ENCODE measurements at regions of chr18 and their contacts with region 1.

Region 1: GRCh38 chr18:2223849-2224248 is 347.5 kb downstream of the METTL4 start:
- DNase-seq: peak; percentile 15
- ATAC-seq: peak; percentile 67
- H3K4me3 ChIP-seq: no peak overlapping the region
- H3K27ac ChIP-seq: no peak overlapping the region
- H3K4me1 ChIP-seq: no peaks in the 10 kb centered on the region
- H3K27me3 ChIP-seq: no peaks in the 10 kb centered on the region
- CTCF ChIP-seq: peak; percentile 40 to 61 (median 49); a peak in 5 of 6 replicates
- POLR2A ChIP-seq: no peak
- RAD21 ChIP-seq: peak; percentile 75

Region 2: GRCh38 chr18:1585879-1586488 is 637.9 kb before region 1 on chr18:
- CTCF ChIA-PET with region 1: interaction called, 4 read pairs
- POLR2A ChIA-PET with region 1: no interaction called
- RAD21 ChIA-PET with region 1: no interaction called
- intact Hi-C with region 1: loop called (anchors 5 kb)
- DNase-seq: peak; percentile 32
- ATAC-seq: peak; percentile 78
- H3K4me3 ChIP-seq: no peak overlapping the region
- H3K27ac ChIP-seq: no peak overlapping the region
- H3K4me1 ChIP-seq: no peaks in the 10 kb centered on the region
- H3K27me3 ChIP-seq: 0 out of 2 replicates have a peak, but pooled peaks cover 6% of the 10 kb centered on the region
- CTCF ChIP-seq: peak; percentile 24 to 62 (median 34); a peak in 4 of 6 replicates
- POLR2A ChIP-seq: no peak
- RAD21 ChIP-seq: peak; percentile 48

Region 3: DNA sequence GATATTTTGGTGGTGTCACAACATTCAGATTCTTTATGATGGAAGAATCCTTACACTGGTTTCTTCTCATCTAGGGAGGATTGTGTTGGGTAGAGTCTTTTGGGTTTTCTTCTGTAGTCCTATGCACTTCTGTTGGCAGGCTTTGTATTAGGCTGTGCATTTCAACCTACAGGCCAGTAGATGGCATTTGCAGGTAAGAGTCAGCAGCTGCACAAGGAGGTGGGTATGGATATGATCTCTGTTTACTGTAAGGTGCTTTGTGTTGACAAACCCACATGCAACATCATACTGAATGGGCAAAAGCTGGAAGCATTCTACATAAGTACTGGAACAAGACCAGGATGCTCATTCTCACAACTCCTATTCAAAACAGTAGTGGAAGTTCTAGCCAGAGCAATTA is 309.4 kb before region 1 on chr18:
- CTCF ChIA-PET with region 1: interaction called, 3 read pairs
- POLR2A ChIA-PET with region 1: no interaction called
- RAD21 ChIA-PET with region 1: no interaction called
- intact Hi-C with region 1: loop called (anchors 2 kb)
- DNase-seq: peak; percentile 22
- ATAC-seq: peak; percentile 90
- H3K4me3 ChIP-seq: no peak overlapping the region
- H3K27ac ChIP-seq: no peak overlapping the region
- H3K4me1 ChIP-seq: no peaks in the 10 kb centered on the region
- H3K27me3 ChIP-seq: no peaks in the 10 kb centered on the region
- CTCF ChIP-seq: peak; percentile 29 to 70 (median 60); a peak in 5 of 6 replicates
- POLR2A ChIP-seq: no peak
- RAD21 ChIP-seq: peak; percentile 58

Region 4: GRCh38 chr18:2104620-2105462 is 119.0 kb before region 1 on chr18:
- CTCF ChIA-PET with region 1: interaction called, 11 read pairs
- POLR2A ChIA-PET with region 1: no interaction called
- RAD21 ChIA-PET with region 1: no interaction called
- intact Hi-C with region 1: loop called (anchors 5 kb)
- DNase-seq: peak; percentile 31
- ATAC-seq: peak; percentile 99
- H3K4me3 ChIP-seq: no peak overlapping the region
- H3K27ac ChIP-seq: no peak overlapping the region
- H3K4me1 ChIP-seq: no peaks in the 10 kb centered on the region
- H3K27me3 ChIP-seq: no peaks in the 10 kb centered on the region
- CTCF ChIP-seq: peak; percentile 48 to 93 (median 81); a peak in 5 of 6 replicates
- POLR2A ChIP-seq: no peak
- RAD21 ChIP-seq: peak; percentile 73

Region 5: DNA sequence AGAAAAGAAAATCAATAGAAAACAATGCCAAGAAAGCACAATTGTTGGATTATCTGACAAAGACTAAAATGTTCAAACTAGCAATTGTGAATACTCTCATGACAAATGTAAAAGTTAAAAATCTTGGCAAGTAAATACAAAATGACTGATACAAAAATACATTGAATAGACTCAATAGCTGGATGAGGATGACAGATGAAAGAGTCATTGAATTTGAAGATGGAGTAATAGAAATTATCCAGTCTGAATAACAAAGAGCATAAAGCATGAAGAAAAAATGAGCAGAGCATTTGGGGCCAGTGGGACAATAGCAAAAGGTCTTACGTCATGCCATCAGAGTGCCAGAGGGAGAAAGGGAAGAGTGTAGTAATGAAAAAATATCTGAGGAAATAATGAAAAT is 11.0 kb before region 1 on chr18:
- CTCF ChIA-PET with region 1: no interaction called
- POLR2A ChIA-PET with region 1: no interaction called
- RAD21 ChIA-PET with region 1: no interaction called
- intact Hi-C with region 1: no loop called
- DNase-seq: no peak
- ATAC-seq: no peak
- H3K4me3 ChIP-seq: no peak overlapping the region
- H3K27ac ChIP-seq: no peak overlapping the region
- H3K4me1 ChIP-seq: no peaks in the 10 kb centered on the region
- H3K27me3 ChIP-seq: no peaks in the 10 kb centered on the region
- CTCF ChIP-seq: no peak
- POLR2A ChIP-seq: no peak
- RAD21 ChIP-seq: no peak

Region 6: GRCh38 chr18:2540575-2540974 is 316.7 kb after region 1 on chr18:
- CTCF ChIA-PET with region 1: interaction called, 5 read pairs
- POLR2A ChIA-PET with region 1: no interaction called
- RAD21 ChIA-PET with region 1: no interaction called
- intact Hi-C with region 1: loop called (anchors 5 kb)
- DNase-seq: no peak
- ATAC-seq: no peak
- H3K4me3 ChIP-seq: no peak overlapping the region
- H3K27ac ChIP-seq: no peak overlapping the region
- H3K4me1 ChIP-seq: no peaks in the 10 kb centered on the region
- H3K27me3 ChIP-seq: no peaks in the 10 kb centered on the region
- CTCF ChIP-seq: no peak
- POLR2A ChIP-seq: no peak
- RAD21 ChIP-seq: no peak